Activated CD4-positive, alpha-beta memory T cell treated with anti-CD3 and anti-CD28 coated beads for 36 hours (primary cell): ENCODE measurements at regions of chr11 and their contacts with region 1.

Region 1: DNA sequence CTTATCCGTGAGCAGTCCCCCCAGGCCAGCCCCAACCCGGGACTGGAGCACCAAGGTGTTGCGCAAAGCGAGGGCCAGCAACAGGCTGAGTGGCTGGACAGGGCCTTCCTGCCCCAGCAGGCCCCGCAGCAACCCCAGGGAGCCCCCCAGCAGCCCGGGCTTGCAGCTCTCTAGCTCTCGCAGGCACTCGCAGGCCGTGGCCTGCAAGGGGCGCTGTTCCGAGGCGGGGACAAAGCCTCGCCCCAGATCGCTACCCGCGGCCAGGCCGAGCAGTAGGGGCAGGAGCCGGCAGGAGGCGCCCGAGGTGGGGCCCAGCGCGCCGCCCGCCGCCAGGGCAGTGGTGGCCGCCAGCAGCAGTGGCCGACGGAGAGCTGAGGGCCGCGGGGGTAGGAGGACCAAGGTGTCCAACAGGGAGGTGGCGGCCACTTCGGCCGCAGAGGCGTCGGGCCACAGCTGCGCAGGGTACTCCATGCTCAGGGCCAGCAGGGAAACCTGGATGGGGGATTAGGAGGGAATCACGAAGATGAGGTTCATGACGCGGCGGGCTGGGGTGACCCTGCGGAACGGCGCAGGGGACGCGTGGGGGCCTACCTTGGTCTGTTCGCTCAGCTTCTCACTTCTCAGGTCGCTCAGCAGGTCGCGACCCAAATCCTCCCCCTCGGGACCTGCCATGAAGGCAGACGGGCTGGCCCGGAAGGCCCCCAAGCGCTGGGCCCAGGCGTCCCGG is 762 bp downstream of the AP5B1 start:
- DNase-seq: peak; percentile 92
- H3K4me3 Mint-ChIP-seq: peak overlapping the region; percentile 87
- H3K27ac Mint-ChIP-seq: peak overlapping the region; percentile 76
- H3K4me1 Mint-ChIP-seq: peaks cover 17% of the 10 kb centered on the region
- H3K27me3 Mint-ChIP-seq: peaks cover 4% of the 10 kb centered on the region

Region 2: GRCh38 chr11:65720237-65720934 is 59.6 kb before region 1 on chr11 and contains the start of gene RNASEH2C:
- CTCF ChIA-PET with region 1: interaction called, 30 read pairs
- POLR2A ChIA-PET with region 1: interaction called, 5 read pairs
- intact Hi-C with region 1: no loop called
- DNase-seq: peak; percentile 89
- H3K4me3 Mint-ChIP-seq: peak within 1 kb of the TSS; percentile 98
- H3K27ac Mint-ChIP-seq: peak within 1 kb of the TSS; percentile 85
- H3K4me1 Mint-ChIP-seq: peaks cover 24% of the 10 kb centered on the region
- H3K27me3 Mint-ChIP-seq: no peaks in the 10 kb centered on the region
- total RNA-seq, gene RNASEH2C: 98.4 to 105 TPM

Region 3: DNA sequence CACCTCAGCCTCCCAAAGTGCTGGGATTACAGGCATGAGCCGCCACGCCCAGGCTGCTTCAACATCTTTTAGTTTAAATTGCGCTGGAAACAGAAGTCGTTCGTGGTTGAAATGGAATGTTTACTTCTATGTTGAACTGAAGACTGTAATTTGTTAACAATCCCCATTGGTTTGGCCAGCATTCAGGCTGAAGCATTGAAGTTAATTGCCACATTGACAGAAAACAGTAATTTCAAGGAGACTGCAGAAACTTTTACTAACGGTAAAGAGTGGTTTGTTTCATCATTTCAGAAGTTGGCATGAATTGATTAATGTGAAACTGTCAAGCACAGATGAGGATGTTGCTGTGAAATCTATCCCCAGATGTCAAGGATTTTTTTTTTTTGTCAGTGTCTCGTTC is 13.5 kb before region 1 on chr11:
- CTCF ChIA-PET with region 1: interaction called, 45 read pairs
- POLR2A ChIA-PET with region 1: interaction called, 7 read pairs
- intact Hi-C with region 1: no loop called
- DNase-seq: no peak
- H3K4me3 Mint-ChIP-seq: no peak overlapping the region
- H3K27ac Mint-ChIP-seq: no peak overlapping the region
- H3K4me1 Mint-ChIP-seq: peaks cover 3% of the 10 kb centered on the region
- H3K27me3 Mint-ChIP-seq: no peaks in the 10 kb centered on the region

Region 4: GRCh38 chr11:65817835-65818742 is 38.1 kb after region 1 on chr11:
- CTCF ChIA-PET with region 1: interaction called, 126 read pairs
- POLR2A ChIA-PET with region 1: interaction called, 19 read pairs
- intact Hi-C with region 1: loop called (anchors 1 kb)
- DNase-seq: peak; percentile 95
- H3K4me3 Mint-ChIP-seq: peak overlapping the region; percentile 69
- H3K27ac Mint-ChIP-seq: peak overlapping the region; percentile 46
- H3K4me1 Mint-ChIP-seq: peaks cover 10% of the 10 kb centered on the region
- H3K27me3 Mint-ChIP-seq: no peaks in the 10 kb centered on the region

Region 5: GRCh38 chr11:65988791-65989592 is 209.0 kb after region 1 on chr11:
- CTCF ChIA-PET with region 1: interaction called, 15 read pairs
- POLR2A ChIA-PET with region 1: no interaction called
- intact Hi-C with region 1: no loop called
- DNase-seq: peak; percentile 95
- H3K4me3 Mint-ChIP-seq: no peak overlapping the region
- H3K27ac Mint-ChIP-seq: peak overlapping the region; percentile 74
- H3K4me1 Mint-ChIP-seq: peaks cover 4% of the 10 kb centered on the region
- H3K27me3 Mint-ChIP-seq: no peaks in the 10 kb centered on the region